ENCODE measurements at regions of chr1 and their contacts with region 1.

Region 1: GRCh38 chr1:34786521-34787325 is 5.7 kb downstream of the GJB3 start:
- DNase-seq: peak; percentile 79
- H3K4me3 ChIP-seq: no peak overlapping the region
- H3K27ac ChIP-seq: no peak overlapping the region
- H3K4me1 ChIP-seq: no peaks in the 10 kb centered on the region
- H3K27me3 ChIP-seq: peaks cover 18 to 19% of the 10 kb centered on the region in 2 experiments
- CTCF ChIP-seq: peak; percentile 74 to 89
- POLR2A ChIP-seq: no peak

Region 2: GRCh38 chr1:34360574-34360973 is 426.1 kb before region 1 on chr1:
- CTCF ChIA-PET with region 1: no interaction called
- POLR2A ChIA-PET with region 1: no interaction called
- dilution Hi-C with region 1: no loop called
- intact Hi-C with region 1: no loop called
- DNase-seq: no peak
- H3K4me3 ChIP-seq: no peak overlapping the region
- H3K27ac ChIP-seq: no peak overlapping the region
- H3K4me1 ChIP-seq: no peaks in the 10 kb centered on the region
- H3K27me3 ChIP-seq: no peaks in the 10 kb centered on the region
- CTCF ChIP-seq: no peak
- POLR2A ChIP-seq: no peak

Region 3: GRCh38 chr1:34865981-34866761 is 79.4 kb after region 1 on chr1:
- CTCF ChIA-PET with region 1: interaction called, 59 read pairs
- POLR2A ChIA-PET with region 1: no interaction called
- dilution Hi-C with region 1: no loop called
- intact Hi-C with region 1: loop called (anchors 1 kb)
- DNase-seq: peak; percentile 63
- H3K4me3 ChIP-seq: peak overlapping the region; percentile 49 to 76 (median 70)
- H3K27ac ChIP-seq: peak overlapping the region; percentile 46
- H3K4me1 ChIP-seq: peaks cover 7% of the 10 kb centered on the region
- H3K27me3 ChIP-seq: peaks cover 12 to 18% of the 10 kb centered on the region in 2 experiments
- CTCF ChIP-seq: peak; percentile 93 to 97
- POLR2A ChIP-seq: peak; percentile 32

Region 4: DNA sequence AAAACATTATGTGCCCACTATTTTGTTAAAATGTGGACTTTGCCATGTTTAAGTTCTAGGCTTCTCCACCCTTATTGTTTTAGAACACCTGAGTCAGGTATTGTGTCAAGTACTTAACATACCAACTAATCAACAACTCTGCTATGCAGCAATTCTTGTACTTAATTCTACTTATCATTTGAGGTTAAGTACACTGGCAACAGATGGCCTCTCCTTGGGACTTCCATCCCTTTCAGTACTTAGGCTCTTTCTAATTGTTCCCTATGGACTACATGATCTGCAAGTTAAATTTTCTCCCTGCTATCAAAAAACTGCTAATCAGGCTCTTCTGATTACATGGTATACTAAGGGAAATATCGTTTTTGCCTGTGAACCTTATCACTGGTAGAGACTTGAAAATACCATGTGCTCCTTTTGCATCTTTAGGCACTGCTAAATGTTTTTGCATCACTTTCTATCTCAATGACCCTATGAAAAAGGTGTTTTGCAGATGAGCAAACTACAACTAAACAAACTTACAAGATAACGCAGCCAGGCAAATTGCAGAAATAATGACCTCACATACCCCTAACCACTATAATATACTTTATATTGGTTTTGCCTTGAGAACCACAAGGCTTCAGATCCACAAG is 387.3 kb after region 1 on chr1:
- CTCF ChIA-PET with region 1: no interaction called
- POLR2A ChIA-PET with region 1: no interaction called
- dilution Hi-C with region 1: no loop called
- intact Hi-C with region 1: loop called (anchors 5 kb)
- DNase-seq: no peak
- H3K4me3 ChIP-seq: no peak overlapping the region
- H3K27ac ChIP-seq: no peak overlapping the region
- H3K4me1 ChIP-seq: no peaks in the 10 kb centered on the region
- H3K27me3 ChIP-seq: no peaks in the 10 kb centered on the region
- CTCF ChIP-seq: no peak
- POLR2A ChIP-seq: no peak

Region 5: GRCh38 chr1:35298464-35298863 is 511.7 kb after region 1 on chr1:
- CTCF ChIA-PET with region 1: no interaction called
- POLR2A ChIA-PET with region 1: no interaction called
- dilution Hi-C with region 1: no loop called
- intact Hi-C with region 1: loop called (anchors 1 kb)
- DNase-seq: peak; percentile 60
- H3K4me3 ChIP-seq: no peak overlapping the region
- H3K27ac ChIP-seq: no peak overlapping the region
- H3K4me1 ChIP-seq: no peaks in the 10 kb centered on the region
- H3K27me3 ChIP-seq: no peaks in the 10 kb centered on the region
- CTCF ChIP-seq: peak; percentile 25 to 40
- POLR2A ChIP-seq: no peak